Common myeloid progenitor, CD34-positive (primary cell): ENCODE measurements at regions of chr12 and their contacts with region 1.

Region 1: GRCh38 chr12:96399919-96400797 is at the start of gene CDK17:
- DNase-seq: peak; percentile 90 to 95 (median 95)
- H3K4me3 ChIP-seq: peak within 1 kb of the TSS; percentile 91 to 100 (median 94)
- H3K27ac ChIP-seq: peak within 1 kb of the TSS; percentile 94 to 95
- H3K4me1 ChIP-seq: peaks cover 20 to 44% (median 27%) of the 10 kb centered on the region in 4 experiments
- H3K27me3 ChIP-seq: no peaks in the 10 kb centered on the region

Region 2: GRCh38 chr12:96303653-96304052 is 96.5 kb before region 1 on chr12:
- CTCF ChIA-PET with region 1: interaction called, 45 read pairs
- POLR2A ChIA-PET with region 1: interaction called, 11 read pairs
- DNase-seq: no peak
- H3K4me3 ChIP-seq: no peak overlapping the region
- H3K27ac ChIP-seq: no peak overlapping the region
- H3K4me1 ChIP-seq: no peaks in the 10 kb centered on the region
- H3K27me3 ChIP-seq: no peaks in the 10 kb centered on the region

Region 3: GRCh38 chr12:96375841-96376604 is 24.1 kb before region 1 on chr12:
- CTCF ChIA-PET with region 1: interaction called, 11 read pairs
- POLR2A ChIA-PET with region 1: interaction called, 14 read pairs
- DNase-seq: peak; percentile 86 to 96 (median 92)
- H3K4me3 ChIP-seq: peak overlapping the region in 3 of 7 experiments; percentile 37 to 52 (median 46)
- H3K27ac ChIP-seq: peak overlapping the region; percentile 74 to 87
- H3K4me1 ChIP-seq: peaks cover 11 to 51% (median 29%) of the 10 kb centered on the region in 4 experiments
- H3K27me3 ChIP-seq: no peaks in the 10 kb centered on the region

Region 4: DNA sequence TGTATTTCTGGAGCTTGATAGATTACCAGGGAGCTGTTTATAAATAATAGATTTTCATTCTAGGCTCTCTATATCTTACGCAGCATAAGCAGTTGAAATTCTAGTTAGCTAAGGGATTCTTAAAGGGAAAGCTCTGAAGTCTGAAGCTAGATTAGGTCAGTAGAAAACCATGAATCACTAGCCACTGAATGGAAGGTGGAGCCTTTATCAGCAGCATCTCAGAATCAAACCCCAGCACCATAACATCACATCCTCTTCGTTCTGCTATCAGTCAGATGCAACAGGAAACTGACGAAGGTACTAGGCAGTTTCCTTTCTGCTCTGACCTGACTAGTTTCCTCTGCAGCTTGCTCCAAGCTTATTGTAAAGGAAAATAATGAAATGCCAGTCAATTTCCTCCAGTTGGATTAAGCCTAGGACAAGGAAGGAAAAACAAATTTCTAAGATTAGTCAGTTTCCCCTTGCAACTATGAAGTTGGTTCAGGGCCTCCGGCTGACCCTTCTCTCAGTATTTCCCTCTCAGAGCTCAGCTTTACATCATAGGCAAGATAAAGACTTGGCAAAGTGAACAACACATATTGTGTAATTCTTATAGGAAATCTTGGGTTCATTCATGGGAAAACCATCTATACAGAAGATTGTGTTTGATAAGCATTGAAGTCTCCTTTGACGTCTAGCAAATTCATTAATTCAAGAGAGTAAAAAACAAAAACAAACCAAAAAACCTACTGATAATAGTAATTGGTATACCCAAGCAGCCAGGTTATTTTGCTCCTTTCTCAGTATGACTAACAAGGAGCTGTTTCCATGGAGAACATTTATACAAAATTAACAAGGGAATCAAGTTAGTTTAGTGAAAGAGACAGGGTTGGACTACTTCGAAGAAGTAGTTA is 45.8 kb after region 1 on chr12:
- CTCF ChIA-PET with region 1: interaction called, 11 read pairs
- POLR2A ChIA-PET with region 1: interaction called, 10 read pairs
- DNase-seq: peak; percentile 97 to 99 (median 98)
- H3K4me3 ChIP-seq: peak overlapping the region in 2 of 7 experiments; percentile 37 to 43
- H3K27ac ChIP-seq: peak overlapping the region; percentile 95 to 96
- H3K4me1 ChIP-seq: peaks cover 4 to 23% (median 18%) of the 10 kb centered on the region in 4 experiments
- H3K27me3 ChIP-seq: no peaks in the 10 kb centered on the region

Region 5: GRCh38 chr12:96471368-96472050 is 71.4 kb after region 1 on chr12:
- CTCF ChIA-PET with region 1: no interaction called
- POLR2A ChIA-PET with region 1: no interaction called
- DNase-seq: no peak
- H3K4me3 ChIP-seq: no peak overlapping the region
- H3K27ac ChIP-seq: no peak overlapping the region
- H3K4me1 ChIP-seq: no peaks in the 10 kb centered on the region
- H3K27me3 ChIP-seq: no peaks in the 10 kb centered on the region

Region 6: DNA sequence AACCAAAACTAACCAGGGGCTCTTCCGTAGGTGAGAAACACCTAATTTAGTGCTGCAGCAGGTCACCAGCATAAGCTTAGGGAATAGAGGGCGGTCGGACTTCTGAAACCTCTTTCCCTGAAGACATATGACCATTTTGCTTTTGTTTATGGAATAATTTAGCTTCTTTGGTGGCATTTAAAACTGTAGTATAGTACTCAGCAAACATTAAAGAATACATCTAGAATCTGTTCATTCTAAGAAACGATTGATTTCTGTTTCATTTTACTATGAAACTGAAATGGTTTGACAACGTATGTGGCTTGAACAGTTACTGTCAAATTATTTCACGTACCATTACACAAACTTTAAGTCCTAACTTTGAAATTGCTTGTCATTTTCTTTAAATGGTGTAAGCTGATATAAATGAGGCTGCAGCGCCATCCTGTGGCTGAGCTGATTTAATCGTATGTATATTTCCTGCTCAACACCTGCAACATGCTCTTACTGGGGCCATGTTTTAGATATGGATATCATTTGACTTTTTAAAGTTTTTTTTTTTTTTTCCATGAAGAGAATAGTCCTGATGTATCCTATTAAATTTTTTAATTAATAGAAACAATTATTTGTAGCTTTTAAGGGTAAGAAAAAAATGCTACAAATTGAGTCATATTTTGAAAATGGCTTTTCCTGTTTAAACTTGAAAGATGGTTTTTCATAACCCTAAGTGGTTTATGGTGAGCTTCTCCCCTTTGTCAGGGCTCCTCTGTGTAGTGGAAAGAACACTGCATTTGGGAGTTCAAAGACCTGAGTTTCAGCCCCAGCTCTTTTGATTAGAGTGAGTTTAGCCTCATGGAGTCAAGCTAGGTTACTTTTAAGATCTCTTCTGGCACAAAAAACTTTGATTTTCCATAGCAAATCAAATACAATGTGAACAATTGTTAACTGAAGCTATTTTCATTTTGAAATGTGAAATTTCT is 116.6 kb after region 1 on chr12:
- CTCF ChIA-PET with region 1: interaction called, 12 read pairs
- POLR2A ChIA-PET with region 1: interaction called, 5 read pairs
- DNase-seq: peak; percentile 86 to 93 (median 90)
- H3K4me3 ChIP-seq: peak overlapping the region in 1 of 7 experiments; percentile 11
- H3K27ac ChIP-seq: no peak overlapping the region
- H3K4me1 ChIP-seq: peaks cover 0 to 3% (median 1%) of the 10 kb centered on the region in 4 experiments
- H3K27me3 ChIP-seq: no peaks in the 10 kb centered on the region